PC-9 (cell line): ENCODE measurements at regions of chr22 and their contacts with region 1.

Region 1: DNA sequence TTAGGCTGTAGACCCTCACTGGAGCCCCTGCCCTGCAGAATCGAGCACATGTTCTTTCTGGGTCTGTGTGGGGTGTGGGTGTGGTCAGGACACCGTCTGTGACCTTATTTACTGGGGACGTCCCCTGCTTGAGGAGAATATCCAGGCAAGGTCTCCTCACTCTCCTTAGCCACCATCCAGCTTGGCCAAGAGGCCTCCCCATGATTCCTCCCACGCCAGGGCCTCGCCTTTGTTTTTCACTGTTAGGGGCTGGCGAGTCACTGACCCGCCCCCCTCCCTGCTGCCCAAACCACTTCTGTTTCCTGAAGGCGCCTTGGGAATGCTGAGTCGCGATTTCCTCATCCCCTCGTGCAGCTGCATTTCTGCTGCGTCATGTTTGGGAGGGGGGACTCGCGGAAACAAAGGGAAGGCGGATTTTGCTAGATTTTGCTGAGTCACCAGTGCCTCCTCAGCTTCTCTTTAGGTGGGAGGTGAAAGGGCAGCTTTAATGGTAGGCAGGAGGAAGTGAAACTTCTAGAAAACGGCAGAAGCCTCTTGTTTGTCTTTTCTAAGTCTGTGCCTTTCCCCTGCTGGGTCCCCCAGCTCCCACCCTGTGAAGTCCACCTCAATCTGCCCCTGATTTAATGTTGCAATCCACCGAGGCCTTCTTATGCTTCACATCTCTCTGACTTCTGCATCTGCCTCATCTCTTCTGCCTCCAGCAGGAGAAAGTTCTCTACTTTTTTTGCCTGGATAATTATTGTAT is 4.0 kb upstream of the HMOX1 start:
- DNase-seq: peak; percentile 92 to 98
- H3K4me3 ChIP-seq: no peak overlapping the region
- H3K27ac ChIP-seq: peak overlapping the region; percentile 84
- H3K4me1 ChIP-seq: peaks cover 76% of the 10 kb centered on the region
- H3K27me3 ChIP-seq: no peaks in the 10 kb centered on the region
- CTCF ChIP-seq: no peak

Region 2: GRCh38 chr22:35357883-35358621 is 18.8 kb before region 1 on chr22:
- CTCF ChIA-PET with region 1: no interaction called
- POLR2A ChIA-PET with region 1: interaction called, 12 read pairs
- intact Hi-C with region 1: loop called (anchors 2 kb)
- DNase-seq: peak; percentile 78 to 98
- H3K4me3 ChIP-seq: no peak overlapping the region
- H3K27ac ChIP-seq: peak overlapping the region; percentile 74
- H3K4me1 ChIP-seq: peaks cover 8% of the 10 kb centered on the region
- H3K27me3 ChIP-seq: no peaks in the 10 kb centered on the region
- CTCF ChIP-seq: no peak

Region 3: GRCh38 chr22:35510481-35510934 is 133.6 kb after region 1 on chr22:
- CTCF ChIA-PET with region 1: no interaction called
- POLR2A ChIA-PET with region 1: interaction called, 11 read pairs
- intact Hi-C with region 1: no loop called
- DNase-seq: peak in 1 of 2 experiments; percentile 25
- H3K4me3 ChIP-seq: no peak overlapping the region
- H3K27ac ChIP-seq: no peak overlapping the region
- H3K4me1 ChIP-seq: peaks cover 15% of the 10 kb centered on the region
- H3K27me3 ChIP-seq: peaks cover 5% of the 10 kb centered on the region; the same call in 1 of the 2 replicates
- CTCF ChIP-seq: no peak

Region 4: DNA sequence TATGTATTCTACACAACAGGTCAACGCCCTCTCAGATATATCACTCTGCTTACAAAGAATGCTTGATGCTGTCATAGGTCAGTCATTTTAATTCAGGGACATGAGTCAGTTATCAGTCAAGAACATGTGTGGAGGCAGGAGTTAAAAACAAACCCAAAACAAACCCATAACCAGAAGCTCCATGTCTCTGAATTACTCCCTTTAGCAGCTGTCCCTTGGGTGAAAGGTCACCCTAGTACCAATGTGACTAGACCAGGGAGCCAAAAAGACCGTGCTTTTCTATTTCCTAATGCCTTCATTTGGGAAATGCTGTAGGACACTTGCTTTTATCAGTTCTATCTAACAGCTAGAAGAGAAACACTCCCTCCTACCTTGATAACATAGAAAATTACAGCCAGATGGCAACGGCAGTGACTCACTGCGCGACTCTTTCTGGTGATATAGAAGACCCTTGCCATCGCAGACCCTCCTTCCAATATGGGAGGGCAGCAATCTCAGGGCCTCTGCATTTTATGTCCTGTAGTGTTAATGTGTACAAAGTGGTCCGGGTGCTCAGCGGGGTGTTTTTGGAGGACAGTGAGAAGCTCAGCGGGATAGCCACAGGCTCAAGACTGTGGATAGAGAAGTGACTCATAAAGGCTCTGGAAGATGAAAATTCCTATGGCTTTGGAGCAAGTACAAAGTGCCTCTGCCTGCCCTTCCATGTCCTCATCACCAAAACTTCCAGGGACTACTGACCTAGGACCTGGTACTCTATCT is 365.6 kb after region 1 on chr22:
- CTCF ChIA-PET with region 1: no interaction called
- POLR2A ChIA-PET with region 1: interaction called, 11 read pairs
- intact Hi-C with region 1: no loop called
- DNase-seq: peak; percentile 27 to 76
- H3K4me3 ChIP-seq: no peak overlapping the region
- H3K27ac ChIP-seq: peak overlapping the region; percentile 56
- H3K4me1 ChIP-seq: peaks cover 20% of the 10 kb centered on the region
- H3K27me3 ChIP-seq: no peaks in the 10 kb centered on the region
- CTCF ChIP-seq: no peak